PC-9 (cell line): ENCODE measurements at regions of chr12 and their contacts with region 1.

Region 1: GRCh38 chr12:120327593-120327992 is at the start of gene PLA2G1B:
- DNase-seq: no peak
- H3K4me3 ChIP-seq: no peak within 1 kb of the TSS
- H3K27ac ChIP-seq: no peak within 1 kb of the TSS
- H3K4me1 ChIP-seq: no peaks in the 10 kb centered on the region
- H3K27me3 ChIP-seq: 0 out of 2 replicates have a peak, but pooled peaks cover 4% of the 10 kb centered on the region
- CTCF ChIP-seq: no peak
- total RNA-seq, gene PLA2G1B: not detected in 2 replicates

Region 2: GRCh38 chr12:119115296-119115905 is 1212.2 kb before region 1 on chr12:
- CTCF ChIA-PET with region 1: no interaction called
- POLR2A ChIA-PET with region 1: no interaction called
- intact Hi-C with region 1: no loop called
- DNase-seq: peak in 1 of 2 experiments; percentile 27
- H3K4me3 ChIP-seq: no peak overlapping the region
- H3K27ac ChIP-seq: no peak overlapping the region
- H3K4me1 ChIP-seq: no peaks in the 10 kb centered on the region
- H3K27me3 ChIP-seq: peaks cover 4% of the 10 kb centered on the region; the same call in 1 of the 2 replicates
- CTCF ChIP-seq: peak; percentile 96

Region 3: DNA sequence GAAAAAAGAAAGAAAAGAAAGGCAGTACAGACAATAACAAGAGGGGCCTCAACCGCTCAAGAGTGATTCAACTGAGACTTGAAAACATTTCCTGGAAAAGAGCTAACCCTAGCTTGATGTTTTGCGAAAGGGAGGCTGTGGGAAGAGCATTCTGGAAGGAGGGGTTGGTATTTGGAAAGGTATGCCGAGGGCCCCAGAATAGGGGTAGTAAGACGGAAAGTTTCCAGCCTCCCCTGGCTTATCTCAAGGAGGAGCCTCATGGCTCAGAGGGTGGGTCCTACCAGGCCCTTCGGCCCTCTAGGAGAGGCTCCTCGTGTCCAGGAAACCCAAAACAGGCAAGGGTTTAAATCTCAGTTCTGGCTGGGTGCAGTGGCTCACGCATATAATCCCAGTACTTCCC is 44.3 kb before region 1 on chr12:
- CTCF ChIA-PET with region 1: no interaction called
- POLR2A ChIA-PET with region 1: interaction called, 12 read pairs
- intact Hi-C with region 1: no loop called
- DNase-seq: no peak
- H3K4me3 ChIP-seq: no peak overlapping the region
- H3K27ac ChIP-seq: no peak overlapping the region
- H3K4me1 ChIP-seq: peaks cover 13% of the 10 kb centered on the region
- H3K27me3 ChIP-seq: no peaks in the 10 kb centered on the region
- CTCF ChIP-seq: no peak

Region 4: GRCh38 chr12:120342156-120342555 is 14.6 kb after region 1 on chr12:
- CTCF ChIA-PET with region 1: no interaction called
- POLR2A ChIA-PET with region 1: no interaction called
- intact Hi-C with region 1: no loop called
- DNase-seq: no peak
- H3K4me3 ChIP-seq: no peak overlapping the region
- H3K27ac ChIP-seq: no peak overlapping the region
- H3K4me1 ChIP-seq: no peaks in the 10 kb centered on the region
- H3K27me3 ChIP-seq: no peaks in the 10 kb centered on the region
- CTCF ChIP-seq: no peak